ENCODE measurements at regions of chr13 and their contacts with region 1.

Region 1: GRCh38 chr13:28324181-28324789 is 170.6 kb downstream of the FLT1 start:
- DNase-seq: peak in 1 of 2 donors; percentile 40
- H3K4me3 ChIP-seq: no peak overlapping the region
- H3K27ac ChIP-seq: no peak overlapping the region
- H3K4me1 ChIP-seq: peaks cover 0 to 13% (median 10%) of the 10 kb centered on the region in 4 donors
- H3K27me3 ChIP-seq: no peaks in the 10 kb centered on the region
- CTCF ChIP-seq: peak; percentile 60

Region 2: DNA sequence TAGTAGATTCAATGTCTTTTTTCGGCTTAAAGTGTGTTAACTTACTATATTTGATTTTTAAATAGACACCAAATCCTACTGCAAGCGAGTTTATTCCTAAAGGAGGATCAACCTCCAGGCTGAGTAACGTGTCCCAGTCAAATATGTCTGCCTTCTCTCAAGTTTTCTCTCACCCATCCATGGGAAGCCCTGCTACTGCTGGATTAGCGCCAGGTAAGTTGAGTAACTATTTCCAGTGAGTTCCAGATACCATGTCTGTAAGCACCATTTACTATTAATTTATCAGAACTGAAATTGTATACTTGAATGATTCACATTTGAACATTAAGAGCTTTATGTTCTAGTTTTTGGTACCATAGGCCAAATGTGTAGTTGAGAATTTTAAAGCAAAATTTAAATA is 104.1 kb before region 1 on chr13:
- intact Hi-C with region 1: no loop called
- DNase-seq: no peak
- H3K4me3 ChIP-seq: no peak overlapping the region
- H3K27ac ChIP-seq: no peak overlapping the region
- H3K4me1 ChIP-seq: no peaks in the 10 kb centered on the region
- H3K27me3 ChIP-seq: no peaks in the 10 kb centered on the region
- CTCF ChIP-seq: no peak

Region 3: GRCh38 chr13:28286263-28286662 is 38.0 kb before region 1 on chr13:
- intact Hi-C with region 1: no loop called
- DNase-seq: no peak
- H3K4me3 ChIP-seq: no peak overlapping the region
- H3K27ac ChIP-seq: no peak overlapping the region
- H3K4me1 ChIP-seq: no peaks in the 10 kb centered on the region
- H3K27me3 ChIP-seq: no peaks in the 10 kb centered on the region
- CTCF ChIP-seq: no peak

Region 4: GRCh38 chr13:28805193-28805819 is 481.0 kb after region 1 on chr13:
- intact Hi-C with region 1: loop called (anchors 5 kb)
- DNase-seq: no peak
- H3K4me3 ChIP-seq: no peak overlapping the region
- H3K27ac ChIP-seq: no peak overlapping the region
- H3K4me1 ChIP-seq: no peaks in the 10 kb centered on the region
- H3K27me3 ChIP-seq: peaks cover 0 to 13% of the 10 kb centered on the region in 2 donors
- CTCF ChIP-seq: peak in 1 of 2 experiments; percentile 15

Region 5: DNA sequence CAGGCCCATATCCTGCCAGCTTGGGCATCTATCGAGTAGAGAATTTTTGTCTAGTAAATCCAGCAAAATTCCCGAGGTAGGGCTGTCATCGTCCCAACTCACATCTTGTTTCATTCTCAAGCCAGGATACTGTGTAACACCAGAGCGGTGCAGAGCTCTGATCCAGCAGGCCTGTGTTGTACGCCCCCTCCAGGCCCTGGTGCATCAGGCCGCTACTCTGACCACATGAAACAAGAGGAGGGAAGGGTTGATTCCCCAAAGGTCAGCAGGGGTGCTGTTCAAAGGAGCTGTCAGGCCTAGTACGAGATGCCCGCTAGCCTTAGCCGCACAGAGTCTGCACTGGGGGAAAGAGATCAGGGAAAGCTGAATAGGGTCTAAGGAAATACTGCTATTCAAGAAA is 995.2 kb after region 1 on chr13:
- intact Hi-C with region 1: no loop called
- DNase-seq: no peak
- H3K4me3 ChIP-seq: no peak overlapping the region
- H3K27ac ChIP-seq: no peak overlapping the region
- H3K4me1 ChIP-seq: no peaks in the 10 kb centered on the region
- H3K27me3 ChIP-seq: no peaks in the 10 kb centered on the region
- CTCF ChIP-seq: no peak